ENCODE measurements at regions of chr1 and their contacts with region 1.

Region 1: DNA sequence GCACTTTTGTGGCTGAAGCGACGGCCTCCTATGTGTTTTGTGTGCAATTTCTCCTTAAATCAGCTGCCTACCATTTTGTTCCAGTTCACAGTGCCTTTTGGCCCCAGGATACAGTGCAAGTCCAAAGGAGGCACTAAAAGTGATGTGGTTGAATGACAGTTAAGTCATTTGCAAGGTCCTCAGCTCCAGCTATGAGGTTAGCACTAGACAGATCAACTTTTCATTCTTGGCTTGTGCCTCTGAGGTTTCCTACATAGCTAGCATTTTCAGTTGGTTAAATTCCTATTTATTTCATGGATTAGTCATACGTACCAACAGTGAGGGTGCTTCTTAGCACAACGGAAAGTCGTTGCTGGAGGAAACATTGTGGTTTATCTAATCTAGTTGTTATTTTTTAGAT is 59.3 kb upstream of the NTPCR start:
- DNase-seq: no peak
- H3K4me3 Mint-ChIP-seq: no peak overlapping the region
- H3K27ac Mint-ChIP-seq: no peak overlapping the region
- H3K4me1 Mint-ChIP-seq: peaks cover 8% of the 10 kb centered on the region
- H3K27me3 Mint-ChIP-seq: peaks cover 8% of the 10 kb centered on the region

Region 2: DNA sequence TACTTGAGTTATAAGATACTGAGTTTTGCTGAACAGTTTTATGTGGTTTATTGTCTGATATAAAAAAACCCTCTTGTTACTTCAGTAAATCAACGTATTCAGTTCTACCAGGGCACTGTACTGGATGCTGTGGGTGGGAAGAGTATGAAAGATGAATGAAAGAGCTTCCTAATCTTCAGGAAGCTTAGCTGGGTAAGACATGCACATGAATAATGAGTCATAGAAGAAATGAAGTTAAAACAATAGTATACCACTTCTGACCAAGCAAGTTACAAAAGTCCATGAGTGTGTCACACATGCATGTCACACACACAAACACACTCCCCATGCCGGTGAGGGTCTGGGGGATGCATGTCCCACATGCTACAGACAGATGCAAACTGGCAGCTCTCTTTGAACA is 367.0 kb before region 1 on chr1:
- intact Hi-C with region 1: no loop called
- DNase-seq: no peak
- H3K4me3 Mint-ChIP-seq: no peak overlapping the region
- H3K27ac Mint-ChIP-seq: no peak overlapping the region
- H3K4me1 Mint-ChIP-seq: peaks cover 9% of the 10 kb centered on the region
- H3K27me3 Mint-ChIP-seq: peaks cover 20% of the 10 kb centered on the region

Region 3: DNA sequence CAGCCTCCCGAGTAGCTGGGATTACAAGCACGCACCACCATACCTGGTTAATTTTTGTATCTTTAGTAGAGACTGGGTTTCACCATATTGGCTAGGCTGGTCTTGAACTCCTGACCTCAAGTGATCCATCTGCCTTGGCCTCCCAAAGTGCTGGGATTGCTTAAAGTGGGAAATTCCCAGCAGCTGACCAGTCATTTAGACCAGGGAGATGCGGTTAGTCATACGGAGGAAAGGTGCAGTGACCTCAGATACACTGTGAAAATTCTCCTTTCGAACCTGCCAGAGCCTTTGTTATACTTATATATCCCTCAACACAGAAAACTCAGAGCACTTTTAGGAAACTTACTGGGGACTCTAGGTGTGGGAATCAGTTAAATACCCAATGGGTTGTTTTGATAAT is 46.3 kb before region 1 on chr1:
- intact Hi-C with region 1: no loop called
- DNase-seq: no peak
- H3K4me3 Mint-ChIP-seq: no peak overlapping the region
- H3K27ac Mint-ChIP-seq: no peak overlapping the region
- H3K4me1 Mint-ChIP-seq: no peaks in the 10 kb centered on the region
- H3K27me3 Mint-ChIP-seq: no peaks in the 10 kb centered on the region

Region 4: DNA sequence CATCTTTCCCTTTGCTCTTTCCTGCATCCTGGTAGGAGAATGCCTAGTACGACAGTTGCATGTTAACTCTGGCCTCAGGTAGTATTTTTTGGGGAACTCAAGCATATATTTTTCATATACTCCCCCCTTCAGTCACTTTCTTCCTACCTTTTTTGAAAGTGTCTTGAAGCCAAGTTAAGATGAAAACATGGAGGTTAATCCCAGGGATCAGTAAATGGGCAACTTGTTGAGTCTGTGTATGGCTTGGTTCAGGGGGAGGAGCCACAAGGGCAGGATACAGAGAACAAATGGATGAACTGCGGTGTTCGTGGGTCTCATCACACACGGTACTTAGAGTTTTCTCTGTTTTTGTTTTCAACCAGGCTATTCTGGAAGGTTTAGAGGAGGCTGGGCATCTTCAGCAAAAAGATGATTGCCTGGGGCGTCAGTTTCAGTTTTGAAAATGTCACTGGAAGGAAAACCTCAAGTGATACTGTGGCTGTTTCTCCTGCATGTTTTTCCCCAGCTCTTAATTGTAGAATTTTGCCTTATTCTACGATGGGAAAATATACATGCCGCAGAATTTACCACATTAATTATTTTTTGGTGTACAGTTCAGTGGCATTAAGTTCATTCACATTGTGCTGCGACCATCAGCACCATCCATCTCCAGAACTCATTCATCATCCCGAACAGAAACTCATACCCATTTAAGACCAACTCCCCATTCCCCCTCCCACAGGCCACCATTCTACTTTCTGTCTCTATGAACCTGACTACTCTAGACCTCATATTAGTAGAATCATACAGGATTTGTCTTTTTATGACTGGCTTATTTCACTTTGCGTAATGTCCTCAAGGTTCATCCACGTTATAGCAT is 14.3 kb before region 1 on chr1:
- intact Hi-C with region 1: loop called (anchors 1 kb)
- DNase-seq: no peak
- H3K4me3 Mint-ChIP-seq: peak overlapping the region; percentile 2
- H3K27ac Mint-ChIP-seq: peak overlapping the region; percentile 43
- H3K4me1 Mint-ChIP-seq: peaks cover 11% of the 10 kb centered on the region
- H3K27me3 Mint-ChIP-seq: no peaks in the 10 kb centered on the region

Measured in activated CD4-positive, alpha-beta T cell treated with anti-CD3 and anti-CD28 coated beads, Interleukin-2, amount 10 ng/mL, durations not matched to agents 24 days and 14 days (primary cell).